Transverse colon (tissue), 4 donors: ENCODE measurements at regions of chr1 and their contacts with region 1.

Region 1: GRCh38 chr1:223695941-223696340 is 16.4 kb upstream of the CAPN2 start:
- DNase-seq: no peak
- H3K4me3 ChIP-seq: no peak overlapping the region
- H3K27ac ChIP-seq: no peak overlapping the region
- H3K4me1 ChIP-seq: peaks cover 0 to 6% (median under 1%) of the 10 kb centered on the region in 4 donors
- H3K27me3 ChIP-seq: no peaks in the 10 kb centered on the region
- CTCF ChIP-seq: no peak
- EP300 ChIP-seq: no peak
- POLR2A ChIP-seq: no peak

Region 2: GRCh38 chr1:223748773-223749733 is 53.1 kb after region 1 on chr1:
- in situ Hi-C with region 1: loop called in 2 of 4 experiments (anchors 5 to 10 kb)
- intact Hi-C with region 1: loop called (anchors 5 kb)
- DNase-seq: peak; percentile 71
- H3K4me3 ChIP-seq: peak overlapping the region; percentile 27 to 50 (median 32)
- H3K27ac ChIP-seq: peak overlapping the region; percentile 67 to 87 (median 83)
- H3K4me1 ChIP-seq: peaks cover 7 to 25% (median 15%) of the 10 kb centered on the region in 4 donors
- H3K27me3 ChIP-seq: no peaks in the 10 kb centered on the region
- CTCF ChIP-seq: peak; percentile 94 to 98 (median 97)
- EP300 ChIP-seq: no peak
- POLR2A ChIP-seq: no peak

Region 3: DNA sequence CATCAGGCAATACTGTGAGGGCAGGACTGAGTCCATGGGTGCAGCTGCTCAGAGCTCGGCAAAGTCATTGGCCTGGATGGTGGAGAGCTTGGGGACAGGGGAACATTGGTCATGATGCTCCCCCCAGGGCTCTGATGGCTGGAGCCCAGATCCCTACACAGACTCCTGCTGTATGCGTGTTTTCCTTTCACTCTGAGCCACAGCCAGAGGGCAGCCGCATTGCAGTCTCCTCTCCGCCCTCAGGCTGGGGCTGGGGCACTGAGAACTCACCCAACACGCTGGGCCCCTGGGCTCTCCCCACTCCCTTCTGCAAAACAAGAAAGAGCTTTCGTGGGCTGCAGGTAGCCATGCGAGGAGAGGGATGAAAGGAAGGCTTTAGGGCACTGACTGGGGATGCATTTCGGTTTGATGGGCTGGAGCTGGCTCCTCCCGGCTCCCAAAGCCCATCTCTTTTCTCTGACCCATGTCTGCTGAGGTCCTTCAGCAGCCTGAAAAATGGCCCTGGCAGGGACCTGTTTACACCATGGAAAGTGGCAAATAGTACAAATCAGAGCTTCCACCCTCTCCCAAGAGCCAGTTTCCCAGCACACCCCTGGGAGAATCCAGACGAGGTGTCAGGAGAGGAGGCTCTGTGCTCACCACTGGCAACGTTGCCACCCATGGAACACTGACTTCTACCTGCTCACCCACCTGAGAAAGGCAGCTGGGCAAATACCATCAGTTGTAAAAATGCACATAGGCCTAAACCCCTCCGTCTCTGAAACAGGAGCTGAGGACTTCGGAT is 60.2 kb after region 1 on chr1:
- in situ Hi-C with region 1: loop called in 2 of 4 experiments (anchors 5 to 10 kb)
- intact Hi-C with region 1: no loop called
- DNase-seq: no peak
- H3K4me3 ChIP-seq: no peak overlapping the region
- H3K27ac ChIP-seq: no peak overlapping the region
- H3K4me1 ChIP-seq: no peaks in the 10 kb centered on the region
- H3K27me3 ChIP-seq: no peaks in the 10 kb centered on the region
- CTCF ChIP-seq: no peak
- EP300 ChIP-seq: no peak
- POLR2A ChIP-seq: no peak

Region 4: GRCh38 chr1:223870617-223871574 is 175.0 kb after region 1 on chr1:
- in situ Hi-C with region 1: no loop called
- intact Hi-C with region 1: no loop called
- DNase-seq: no peak
- H3K4me3 ChIP-seq: no peak overlapping the region
- H3K27ac ChIP-seq: no peak overlapping the region
- H3K4me1 ChIP-seq: no peaks in the 10 kb centered on the region
- H3K27me3 ChIP-seq: peaks cover 3% of the 10 kb centered on the region
- CTCF ChIP-seq: no peak
- EP300 ChIP-seq: no peak
- POLR2A ChIP-seq: no peak